Activated CD8-positive, alpha-beta T cell treated with anti-CD3 and anti-CD28 coated beads for 36 hours (primary cell): ENCODE measurements at regions of chr17 and their contacts with region 1.

Region 1: DNA sequence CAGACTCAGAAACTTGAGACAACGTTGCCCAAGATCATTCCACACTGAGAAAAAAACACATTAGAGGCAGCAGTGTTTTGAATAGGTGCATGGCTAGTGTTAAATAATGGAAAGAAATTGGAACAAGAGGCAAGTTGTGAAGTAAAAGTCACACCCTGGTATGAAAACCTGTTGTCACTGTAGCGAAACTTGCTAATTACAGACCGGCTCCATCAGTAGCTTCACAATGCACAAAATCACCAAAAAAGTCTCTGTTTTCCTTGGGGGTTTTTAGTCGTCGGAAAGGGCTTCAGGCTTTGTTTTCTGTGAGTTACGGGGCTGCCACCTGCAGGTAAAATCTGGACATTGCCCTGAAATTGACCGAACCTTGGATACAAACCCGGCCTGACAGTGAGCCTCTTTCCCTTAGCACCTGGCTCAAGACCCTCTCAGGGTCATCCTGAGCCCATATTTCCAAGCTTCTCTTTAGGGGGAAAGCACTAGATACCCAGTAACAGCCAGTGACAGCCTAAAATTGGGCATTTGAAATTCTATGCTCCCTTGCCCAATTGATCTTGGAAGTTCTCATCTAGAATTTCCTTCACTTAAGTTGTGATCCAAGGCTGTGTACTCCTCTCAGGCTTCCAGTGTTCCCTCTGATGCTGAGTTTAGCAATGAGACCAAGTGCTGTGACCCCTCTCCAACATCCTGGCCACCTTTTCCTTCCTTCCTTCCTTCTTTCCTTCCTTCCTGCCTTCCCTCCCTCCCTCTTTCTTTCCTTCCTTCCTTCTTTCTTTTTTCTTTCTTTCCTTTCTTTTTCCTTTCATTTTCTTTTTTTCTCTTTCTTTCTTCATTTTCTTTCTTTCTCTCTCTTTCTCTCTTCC is 7.2 kb upstream of the GRB2 start:
- DNase-seq: peak; percentile 88
- ATAC-seq: peak; percentile 92
- H3K4me3 Mint-ChIP-seq: peak overlapping the region; percentile 33
- H3K27ac Mint-ChIP-seq: peak overlapping the region; percentile 23
- H3K4me1 Mint-ChIP-seq: peaks cover 14% of the 10 kb centered on the region
- H3K27me3 Mint-ChIP-seq: no peaks in the 10 kb centered on the region
- CTCF ChIP-seq: peak; percentile 81

Region 2: DNA sequence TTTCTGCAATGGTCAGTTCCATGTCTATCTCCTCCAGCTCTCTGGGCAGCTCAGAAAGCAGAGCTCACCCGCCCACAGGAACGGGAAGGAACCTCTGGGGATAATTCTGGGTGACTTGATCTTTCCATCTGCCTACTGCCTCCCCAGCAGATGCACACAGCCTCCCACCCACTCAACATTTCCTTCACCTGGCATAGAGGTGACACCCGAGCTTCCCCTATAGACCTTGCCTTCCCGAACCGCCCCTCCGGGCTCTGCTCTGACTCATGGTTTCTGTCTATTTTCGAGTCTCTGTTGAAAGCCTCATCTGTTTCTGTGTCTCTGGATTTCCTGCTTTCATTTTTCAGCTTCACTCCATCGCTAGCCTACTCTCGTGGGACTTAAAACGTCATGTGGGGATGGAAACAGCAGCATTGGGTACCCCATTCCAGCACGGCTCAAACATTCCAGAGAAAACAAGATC is 162.6 kb before region 1 on chr17:
- CTCF ChIA-PET with region 1: interaction called, 11 read pairs
- POLR2A ChIA-PET with region 1: no interaction called
- intact Hi-C with region 1: no loop called
- DNase-seq: peak; percentile 92
- ATAC-seq: peak; percentile 97
- H3K4me3 Mint-ChIP-seq: peak overlapping the region; percentile 64
- H3K27ac Mint-ChIP-seq: peak overlapping the region; percentile 93
- H3K4me1 Mint-ChIP-seq: peaks cover 67% of the 10 kb centered on the region
- H3K27me3 Mint-ChIP-seq: no peaks in the 10 kb centered on the region
- CTCF ChIP-seq: no peak

Region 3: GRCh38 chr17:75271233-75271954 is 141.3 kb before region 1 on chr17:
- CTCF ChIA-PET with region 1: interaction called, 23 read pairs
- POLR2A ChIA-PET with region 1: interaction called, 13 read pairs
- intact Hi-C with region 1: no loop called
- DNase-seq: peak; percentile 87
- ATAC-seq: peak; percentile 91
- H3K4me3 Mint-ChIP-seq: peak overlapping the region; percentile 86
- H3K27ac Mint-ChIP-seq: peak overlapping the region; percentile 81
- H3K4me1 Mint-ChIP-seq: peaks cover 32% of the 10 kb centered on the region
- H3K27me3 Mint-ChIP-seq: no peaks in the 10 kb centered on the region
- CTCF ChIP-seq: peak; percentile 66

Region 4: GRCh38 chr17:75325827-75326225 is 86.9 kb before region 1 on chr17:
- CTCF ChIA-PET with region 1: interaction called, 39 read pairs
- POLR2A ChIA-PET with region 1: interaction called, 3 read pairs
- intact Hi-C with region 1: loop called (anchors 2 kb)
- DNase-seq: no peak
- ATAC-seq: no peak
- H3K4me3 Mint-ChIP-seq: no peak overlapping the region
- H3K27ac Mint-ChIP-seq: peak overlapping the region; percentile 71
- H3K4me1 Mint-ChIP-seq: peaks cover 27% of the 10 kb centered on the region
- H3K27me3 Mint-ChIP-seq: no peaks in the 10 kb centered on the region
- CTCF ChIP-seq: no peak

Region 5: GRCh38 chr17:75393523-75394331 is 19.0 kb before region 1 on chr17:
- CTCF ChIA-PET with region 1: interaction called, 12 read pairs
- POLR2A ChIA-PET with region 1: no interaction called
- intact Hi-C with region 1: no loop called
- DNase-seq: peak; percentile 90
- ATAC-seq: peak; percentile 90
- H3K4me3 Mint-ChIP-seq: peak overlapping the region; percentile 96
- H3K27ac Mint-ChIP-seq: peak overlapping the region; percentile 78
- H3K4me1 Mint-ChIP-seq: peaks cover 72% of the 10 kb centered on the region
- H3K27me3 Mint-ChIP-seq: no peaks in the 10 kb centered on the region
- CTCF ChIP-seq: no peak

Region 6: DNA sequence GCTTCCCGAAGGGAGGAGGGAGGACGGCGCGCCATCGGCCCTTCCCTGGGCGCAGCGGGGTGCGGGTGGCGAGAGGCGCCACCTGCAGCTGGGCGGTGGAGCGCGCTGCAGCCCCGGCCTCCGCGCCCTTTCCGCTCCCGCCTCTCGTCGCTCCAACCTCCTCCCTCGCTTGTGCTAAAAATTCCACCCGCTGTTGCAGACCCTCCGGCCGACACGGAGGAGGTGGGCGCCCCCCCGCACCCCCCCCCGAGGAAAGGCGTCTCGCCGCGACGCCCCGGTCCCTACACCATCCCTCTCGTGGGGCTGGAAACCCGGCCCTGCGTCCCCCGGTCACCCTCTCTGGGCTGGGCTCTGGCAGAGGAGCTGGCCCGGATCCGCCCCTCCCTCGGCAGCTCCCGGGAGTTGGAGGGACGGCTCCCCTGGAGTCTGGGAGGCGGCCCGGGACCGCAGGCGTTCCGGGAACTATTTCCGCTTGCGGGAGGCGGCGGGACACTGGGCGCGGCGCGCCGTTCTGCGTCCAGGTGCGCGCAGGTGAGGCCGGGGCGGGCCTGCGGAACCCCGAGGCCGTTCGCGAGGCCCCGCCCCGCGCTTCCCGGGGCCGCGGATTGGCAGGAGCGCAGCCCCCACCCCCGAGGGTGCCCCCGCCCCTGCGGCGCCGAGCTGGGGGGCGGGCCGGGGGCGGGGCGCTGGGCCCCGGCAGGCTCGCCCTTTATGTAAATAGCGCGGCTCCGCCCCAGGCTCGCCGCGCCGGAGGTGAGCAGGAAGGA is 112.5 kb after region 1 on chr17 and contains the start of gene LLGL2:
- CTCF ChIA-PET with region 1: no interaction called
- POLR2A ChIA-PET with region 1: no interaction called
- intact Hi-C with region 1: no loop called
- DNase-seq: peak; percentile 82
- ATAC-seq: peak; percentile 95
- H3K4me3 Mint-ChIP-seq: peak within 1 kb of the TSS; percentile 69
- H3K27ac Mint-ChIP-seq: no peak within 1 kb of the TSS
- H3K4me1 Mint-ChIP-seq: peaks cover 10% of the 10 kb centered on the region
- H3K27me3 Mint-ChIP-seq: peaks cover 2% of the 10 kb centered on the region
- CTCF ChIP-seq: no peak
- total RNA-seq, gene LLGL2: 7.2 to 7.4 TPM